ENCODE measurements at regions of chr2 and their contacts with region 1.

Region 1: DNA sequence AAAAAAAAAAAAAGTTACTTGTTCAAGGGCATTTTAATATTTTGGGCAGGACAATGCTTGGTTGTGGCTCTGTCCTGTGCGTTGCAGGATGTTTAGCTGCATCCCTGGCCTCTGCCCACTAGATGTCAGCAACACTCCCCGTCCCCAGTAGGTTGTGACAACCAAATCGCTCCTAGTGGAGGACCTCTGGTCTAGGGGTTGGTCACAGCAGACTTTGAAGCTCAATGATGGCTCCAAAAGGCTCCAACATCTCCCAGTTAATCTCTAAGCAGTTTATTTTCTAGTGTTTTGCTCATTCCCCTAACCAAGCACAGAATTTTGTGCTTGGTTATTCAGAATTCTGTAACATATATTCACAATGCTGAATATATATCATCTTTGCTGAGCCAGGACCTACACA is 67.0 kb downstream of the CHRNA1 start:
- DNase-seq: peak; percentile 80
- H3K4me3 ChIP-seq: no peak overlapping the region; a peak in 1 of 4 replicates
- H3K27ac ChIP-seq: no peak overlapping the region
- H3K4me1 ChIP-seq: peaks cover 0 to 5% of the 10 kb centered on the region in 2 experiments; a peak in 1 of 4 replicates
- H3K27me3 ChIP-seq: no peaks in the 10 kb centered on the region
- CTCF ChIP-seq: peak; percentile 89
- EP300 ChIP-seq: no peak
- RAD21 ChIP-seq: peak; percentile 78

Region 2: DNA sequence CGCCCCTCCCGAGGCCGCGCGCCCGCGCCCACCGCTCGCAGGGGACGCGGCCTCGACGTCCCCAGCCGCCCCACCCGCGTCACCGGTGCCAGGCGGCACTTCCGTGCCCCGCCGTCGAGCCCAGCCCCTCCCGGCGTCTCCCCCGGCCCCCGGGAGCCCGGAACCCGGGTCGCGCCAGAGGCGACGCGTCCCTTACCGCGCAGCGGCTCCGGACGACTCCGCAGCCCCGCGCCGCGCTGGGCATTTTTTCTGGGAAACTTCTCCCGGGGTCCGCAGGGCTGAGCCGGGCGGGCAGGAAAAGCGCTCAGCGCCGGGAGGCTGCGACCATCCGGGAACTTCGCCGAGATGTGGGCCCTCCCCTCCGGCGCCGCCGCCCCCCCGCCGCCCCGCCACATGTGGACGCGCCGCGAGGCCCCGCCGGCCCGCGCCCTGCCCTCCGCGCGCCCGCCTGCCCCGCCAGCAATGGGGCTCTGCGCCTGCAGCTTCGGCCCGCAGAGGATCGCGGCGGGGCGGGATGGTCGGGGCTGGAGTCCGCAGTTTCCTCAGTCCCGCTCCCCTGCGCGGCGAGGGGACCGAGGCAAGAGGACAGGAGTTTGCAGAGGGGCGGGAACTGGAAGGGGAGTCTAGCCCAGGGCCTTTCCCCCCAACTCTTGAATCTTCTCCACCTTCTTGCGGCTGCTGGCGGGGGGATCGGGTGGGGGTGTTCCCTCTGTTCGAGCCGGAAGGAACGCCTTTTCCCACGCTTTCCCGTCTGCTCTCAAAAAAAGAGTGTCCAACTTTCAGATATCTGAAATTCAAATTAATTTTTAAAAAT is 14.5 kb before region 1 on chr2:
- CTCF ChIA-PET with region 1: interaction called, 93 read pairs
- POLR2A ChIA-PET with region 1: interaction called, 3 read pairs
- DNase-seq: peak; percentile 95
- H3K4me3 ChIP-seq: peak overlapping the region; percentile 89 to 93
- H3K27ac ChIP-seq: peak overlapping the region; percentile 72 to 89
- H3K4me1 ChIP-seq: peaks cover 6 to 47% of the 10 kb centered on the region in 2 experiments; a peak in 2 of 4 replicates
- H3K27me3 ChIP-seq: no peaks in the 10 kb centered on the region
- CTCF ChIP-seq: 0 out of 2 replicates have a peak, but pooled peaks have one; percentile 6
- EP300 ChIP-seq: 0 out of 4 replicates have a peak, but pooled peaks of 1 of the 2 experiments have one; percentile 11
- RAD21 ChIP-seq: no peak

Region 3: GRCh38 chr2:174717273-174717672 is 20.0 kb after region 1 on chr2:
- CTCF ChIA-PET with region 1: interaction called, 55 read pairs
- POLR2A ChIA-PET with region 1: no interaction called
- DNase-seq: no peak
- H3K4me3 ChIP-seq: no peak overlapping the region
- H3K27ac ChIP-seq: no peak overlapping the region
- H3K4me1 ChIP-seq: no peaks in the 10 kb centered on the region
- H3K27me3 ChIP-seq: no peaks in the 10 kb centered on the region
- CTCF ChIP-seq: no peak
- EP300 ChIP-seq: no peak
- RAD21 ChIP-seq: no peak

Region 4: DNA sequence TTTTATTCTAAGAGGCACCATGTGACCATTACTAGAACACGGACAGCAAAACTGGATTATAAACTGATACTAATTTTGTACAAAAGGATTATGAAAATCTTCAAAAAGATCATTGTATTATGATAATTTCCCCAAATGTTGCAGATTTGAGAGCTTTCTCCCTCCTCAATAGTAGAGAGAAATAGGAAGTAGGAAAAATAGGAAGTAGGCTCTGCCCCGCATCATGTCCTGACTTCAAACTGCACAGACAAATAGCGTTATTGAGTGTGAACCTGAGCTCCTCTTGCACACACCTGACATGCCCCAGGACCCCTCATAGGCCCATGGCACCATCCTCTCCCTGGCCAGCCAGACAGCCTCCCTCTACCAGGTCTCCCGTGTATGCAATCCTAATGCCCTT is 41.6 kb after region 1 on chr2:
- CTCF ChIA-PET with region 1: interaction called, 22 read pairs
- POLR2A ChIA-PET with region 1: no interaction called
- DNase-seq: no peak
- H3K4me3 ChIP-seq: no peak overlapping the region
- H3K27ac ChIP-seq: no peak overlapping the region
- H3K4me1 ChIP-seq: no peaks in the 10 kb centered on the region
- H3K27me3 ChIP-seq: no peaks in the 10 kb centered on the region
- CTCF ChIP-seq: no peak
- EP300 ChIP-seq: no peak
- RAD21 ChIP-seq: no peak

Region 5: GRCh38 chr2:174985630-174986029 is 288.4 kb after region 1 on chr2:
- CTCF ChIA-PET with region 1: interaction called, 51 read pairs
- POLR2A ChIA-PET with region 1: no interaction called
- DNase-seq: peak; percentile 27
- H3K4me3 ChIP-seq: no peak overlapping the region
- H3K27ac ChIP-seq: 0 out of 4 replicates have a peak overlapping the region, but pooled peaks of 1 of the 2 experiments have one; percentile 2
- H3K4me1 ChIP-seq: peaks cover 0 to 2% of the 10 kb centered on the region in 2 experiments; a peak in 2 of 4 replicates
- H3K27me3 ChIP-seq: no peaks in the 10 kb centered on the region
- CTCF ChIP-seq: peak; percentile 83
- EP300 ChIP-seq: no peak
- RAD21 ChIP-seq: peak; percentile 87

Region 6: DNA sequence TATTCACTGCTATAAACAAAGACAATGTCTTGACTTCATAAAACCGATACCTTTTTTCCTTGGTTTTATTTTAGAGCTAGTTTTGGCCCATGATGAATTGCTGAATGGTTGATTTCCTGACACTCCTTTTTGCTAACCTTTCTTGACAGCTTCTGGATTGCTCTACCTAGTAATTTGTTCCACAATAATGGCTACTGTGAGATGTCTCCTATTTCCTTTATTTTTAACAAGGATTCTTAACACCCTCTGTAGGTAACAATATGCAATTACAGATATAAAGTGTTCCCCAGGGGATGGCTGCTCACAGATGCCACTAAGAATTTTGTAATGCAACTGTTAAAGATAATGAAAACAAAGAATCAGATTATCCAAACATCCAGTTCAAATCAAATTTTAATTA is 585.0 kb after region 1 on chr2:
- CTCF ChIA-PET with region 1: interaction called, 16 read pairs
- POLR2A ChIA-PET with region 1: no interaction called
- DNase-seq: peak; percentile 64
- H3K4me3 ChIP-seq: no peak overlapping the region
- H3K27ac ChIP-seq: no peak overlapping the region
- H3K4me1 ChIP-seq: no peaks in the 10 kb centered on the region; a peak in 2 of 4 replicates
- H3K27me3 ChIP-seq: no peaks in the 10 kb centered on the region
- CTCF ChIP-seq: peak; percentile 57
- EP300 ChIP-seq: no peak
- RAD21 ChIP-seq: peak; percentile 73

Region 7: DNA sequence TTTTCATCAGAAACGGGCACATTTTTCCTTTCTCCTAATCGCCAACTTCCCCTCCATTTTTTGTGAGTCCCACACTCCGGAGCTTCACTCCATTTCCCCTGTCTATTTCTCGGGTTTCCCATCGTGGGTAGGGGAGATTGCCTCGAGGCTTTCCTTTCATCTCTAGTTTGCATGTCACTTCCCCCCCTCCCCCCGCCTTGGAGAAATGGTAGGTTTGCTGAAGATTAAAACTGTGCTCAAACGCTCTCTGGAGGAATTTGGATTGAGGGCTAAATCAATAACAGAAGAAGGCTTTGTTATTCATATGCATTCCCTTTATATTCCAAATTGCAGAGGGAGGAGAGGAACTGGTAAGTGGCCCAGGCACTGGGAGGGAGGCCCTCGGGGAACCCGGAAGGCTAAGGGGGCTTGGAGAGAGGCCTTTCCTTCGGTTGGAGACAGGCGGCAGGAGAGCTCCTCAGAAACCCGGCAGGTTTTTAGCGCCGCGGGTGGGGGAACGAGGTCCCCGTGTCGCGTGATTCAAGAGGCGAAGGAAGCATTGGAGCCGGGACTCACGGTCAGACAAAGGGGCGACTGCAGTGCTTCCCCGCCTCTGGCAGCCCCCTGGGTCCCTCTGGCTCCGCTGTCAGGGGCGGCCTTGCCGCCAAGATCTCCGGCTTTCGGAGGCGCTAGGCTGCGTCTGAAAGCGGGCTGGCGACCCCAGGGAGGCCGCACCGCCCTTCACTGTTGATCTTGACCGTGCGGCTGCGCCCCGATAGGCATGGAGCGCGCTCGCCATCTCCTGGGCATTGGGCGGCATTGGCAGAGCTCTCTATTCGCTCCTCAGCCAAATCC is 1399.9 kb after region 1 on chr2:
- CTCF ChIA-PET with region 1: interaction called, 20 read pairs
- POLR2A ChIA-PET with region 1: no interaction called
- DNase-seq: peak; percentile 92
- H3K4me3 ChIP-seq: peak overlapping the region; percentile 48 to 59
- H3K27ac ChIP-seq: no peak overlapping the region
- H3K4me1 ChIP-seq: peaks cover 0 to 25% of the 10 kb centered on the region in 2 experiments; a peak in 2 of 4 replicates
- H3K27me3 ChIP-seq: peaks cover 94% of the 10 kb centered on the region
- CTCF ChIP-seq: peak; percentile 80
- EP300 ChIP-seq: no peak
- RAD21 ChIP-seq: peak; percentile 85